ENCODE measurements at regions of chr15 and their contacts with region 1.

Region 1: DNA sequence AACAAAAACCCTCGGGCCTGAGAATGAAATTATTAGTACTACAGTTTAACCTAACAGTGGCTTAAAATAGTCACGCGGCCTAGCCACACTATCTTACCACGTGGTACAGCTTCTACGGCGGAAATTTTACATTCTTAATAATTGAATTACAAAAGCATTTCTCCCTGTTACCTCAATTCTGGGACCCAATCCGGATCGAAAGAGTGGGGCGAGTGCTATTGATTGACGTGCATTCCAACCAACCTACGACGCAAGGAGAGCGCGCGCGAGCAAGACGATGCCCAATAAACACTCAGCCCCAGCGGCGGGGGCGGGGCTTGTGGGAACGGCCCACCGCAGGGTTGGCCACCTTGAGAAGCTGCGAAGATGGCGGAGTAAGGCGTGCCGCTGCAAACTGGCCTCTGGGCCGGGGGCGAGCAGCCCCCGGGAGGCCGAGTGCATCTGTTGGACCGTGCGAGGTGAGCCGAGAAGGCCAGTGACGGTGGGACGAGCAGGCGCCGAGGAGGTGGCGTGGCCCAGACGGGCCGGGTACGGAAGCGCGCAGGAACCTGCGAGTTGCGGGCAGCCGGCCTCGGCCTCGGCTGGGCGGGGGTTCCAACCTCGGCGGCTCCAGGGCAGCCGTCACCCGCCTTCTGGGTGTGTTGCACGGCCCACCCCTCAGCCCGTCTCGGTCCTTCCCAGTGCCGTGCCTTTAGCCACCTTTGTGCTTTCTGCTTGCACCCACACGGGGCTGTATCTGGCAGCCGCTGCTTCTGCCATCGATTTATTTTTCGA is 48.6 kb downstream of the OIP5 start:
- DNase-seq: peak; percentile 90 to 95
- H3K4me3 ChIP-seq: peak overlapping the region; percentile 79
- H3K27ac ChIP-seq: peak overlapping the region; percentile 59
- H3K4me1 ChIP-seq: peaks cover 32% of the 10 kb centered on the region
- H3K27me3 ChIP-seq: no peaks in the 10 kb centered on the region
- CTCF ChIP-seq: no peak

Region 2: GRCh38 chr15:40873625-40874561 is 409.9 kb before region 1 on chr15 and contains the start of gene RHOV:
- CTCF ChIA-PET with region 1: interaction called, 10 read pairs
- POLR2A ChIA-PET with region 1: interaction called, 3 read pairs
- intact Hi-C with region 1: no loop called
- DNase-seq: peak; percentile 70 to 78
- H3K4me3 ChIP-seq: peak within 1 kb of the TSS; percentile 81
- H3K27ac ChIP-seq: peak within 1 kb of the TSS; percentile 91
- H3K4me1 ChIP-seq: peaks cover 52% of the 10 kb centered on the region
- H3K27me3 ChIP-seq: no peaks in the 10 kb centered on the region
- CTCF ChIP-seq: peak; percentile 42; the same call in 1 of the 2 replicates
- total RNA-seq, gene RHOV: 1.4 and 4.1 TPM in 2 replicates

Region 3: DNA sequence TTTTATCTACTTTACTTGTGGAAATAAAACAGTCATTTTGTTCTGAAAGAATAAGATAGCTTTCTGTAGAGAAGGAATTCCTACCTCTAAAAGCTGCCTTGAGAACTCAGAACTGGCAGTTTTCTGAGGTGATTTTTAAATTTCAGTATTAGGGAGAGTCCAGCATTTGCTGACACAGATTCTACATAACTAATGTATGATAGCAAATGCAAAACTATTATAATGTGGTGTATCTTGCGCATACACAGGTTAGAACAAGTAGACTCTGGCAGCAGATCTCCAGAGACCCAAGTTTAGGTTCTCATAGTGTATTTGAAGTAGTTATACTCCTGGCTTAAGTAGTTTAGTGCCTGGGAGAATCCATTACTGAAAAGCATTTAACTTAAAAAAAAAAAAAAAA is 17.7 kb after region 1 on chr15:
- CTCF ChIA-PET with region 1: no interaction called
- POLR2A ChIA-PET with region 1: interaction called, 13 read pairs
- intact Hi-C with region 1: no loop called
- DNase-seq: no peak
- H3K4me3 ChIP-seq: no peak overlapping the region
- H3K27ac ChIP-seq: no peak overlapping the region
- H3K4me1 ChIP-seq: no peaks in the 10 kb centered on the region
- H3K27me3 ChIP-seq: no peaks in the 10 kb centered on the region
- CTCF ChIP-seq: no peak

Region 4: GRCh38 chr15:41331833-41332787 is 48.3 kb after region 1 on chr15 and contains the start of gene OIP5:
- CTCF ChIA-PET with region 1: no interaction called
- POLR2A ChIA-PET with region 1: no interaction called
- intact Hi-C with region 1: loop called (anchors 5 kb)
- DNase-seq: peak; percentile 97 to 98
- H3K4me3 ChIP-seq: peak within 1 kb of the TSS; percentile 85
- H3K27ac ChIP-seq: peak within 1 kb of the TSS; percentile 58
- H3K4me1 ChIP-seq: peaks cover 22% of the 10 kb centered on the region; the same call in 1 of the 2 replicates
- H3K27me3 ChIP-seq: no peaks in the 10 kb centered on the region
- CTCF ChIP-seq: peak; percentile 73
- total RNA-seq, gene OIP5: 23.9 and 25.4 TPM in 2 replicates

Measured in PC-9 (cell line).